Gastrocnemius medialis (tissue), 4 donors: ENCODE measurements at regions of chr3 and their contacts with region 1.

Region 1: DNA sequence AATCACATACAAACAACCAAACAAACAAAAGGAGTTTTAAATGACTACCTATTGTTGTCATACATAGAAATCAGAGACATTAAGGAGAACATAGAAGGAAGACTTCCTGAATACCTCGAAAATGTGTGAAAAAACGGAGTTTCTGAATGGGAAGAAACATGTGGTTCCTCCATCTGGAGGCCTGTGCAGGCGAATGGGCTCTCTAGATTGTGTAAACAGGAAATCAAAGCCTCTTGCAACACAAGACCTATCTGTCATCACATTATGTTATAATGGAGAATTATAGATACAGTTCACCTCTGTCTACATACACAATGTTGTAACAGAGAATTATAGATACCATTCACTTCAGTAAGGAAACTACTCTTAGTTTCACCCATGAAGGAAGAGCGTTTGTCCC is 44.1 kb downstream of the RUBCN start:
- DNase-seq: no peak
- ATAC-seq: no peak
- H3K4me3 ChIP-seq: no peak overlapping the region
- H3K27ac ChIP-seq: no peak overlapping the region
- H3K4me1 ChIP-seq: no peaks in the 10 kb centered on the region
- H3K27me3 ChIP-seq: no peaks in the 10 kb centered on the region
- CTCF ChIP-seq: no peak
- POLR2A ChIP-seq: no peak

Region 2: DNA sequence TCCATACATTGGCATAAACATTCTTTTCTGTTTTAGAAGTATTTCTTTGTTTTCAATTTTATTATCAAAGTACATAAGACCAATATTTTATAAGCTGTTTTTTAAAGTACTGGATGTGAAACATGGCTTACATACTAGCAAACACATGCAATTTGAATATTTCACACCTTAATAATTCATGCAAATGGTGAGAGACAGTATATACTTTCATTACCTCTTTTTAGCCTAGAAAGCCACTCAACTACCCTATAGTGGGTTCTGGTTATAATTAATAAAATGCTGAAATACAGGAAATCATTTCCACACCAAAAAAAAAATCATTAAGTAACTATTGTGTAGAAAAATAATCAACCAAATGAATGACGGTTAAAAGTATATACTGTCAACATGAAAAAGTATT is 624.6 kb before region 1 on chr3:
- in situ Hi-C with region 1: no loop called
- intact Hi-C with region 1: no loop called
- DNase-seq: no peak
- ATAC-seq: no peak
- H3K4me3 ChIP-seq: no peak overlapping the region
- H3K27ac ChIP-seq: no peak overlapping the region
- H3K4me1 ChIP-seq: no peaks in the 10 kb centered on the region
- H3K27me3 ChIP-seq: no peaks in the 10 kb centered on the region
- CTCF ChIP-seq: no peak
- POLR2A ChIP-seq: no peak

Region 3: DNA sequence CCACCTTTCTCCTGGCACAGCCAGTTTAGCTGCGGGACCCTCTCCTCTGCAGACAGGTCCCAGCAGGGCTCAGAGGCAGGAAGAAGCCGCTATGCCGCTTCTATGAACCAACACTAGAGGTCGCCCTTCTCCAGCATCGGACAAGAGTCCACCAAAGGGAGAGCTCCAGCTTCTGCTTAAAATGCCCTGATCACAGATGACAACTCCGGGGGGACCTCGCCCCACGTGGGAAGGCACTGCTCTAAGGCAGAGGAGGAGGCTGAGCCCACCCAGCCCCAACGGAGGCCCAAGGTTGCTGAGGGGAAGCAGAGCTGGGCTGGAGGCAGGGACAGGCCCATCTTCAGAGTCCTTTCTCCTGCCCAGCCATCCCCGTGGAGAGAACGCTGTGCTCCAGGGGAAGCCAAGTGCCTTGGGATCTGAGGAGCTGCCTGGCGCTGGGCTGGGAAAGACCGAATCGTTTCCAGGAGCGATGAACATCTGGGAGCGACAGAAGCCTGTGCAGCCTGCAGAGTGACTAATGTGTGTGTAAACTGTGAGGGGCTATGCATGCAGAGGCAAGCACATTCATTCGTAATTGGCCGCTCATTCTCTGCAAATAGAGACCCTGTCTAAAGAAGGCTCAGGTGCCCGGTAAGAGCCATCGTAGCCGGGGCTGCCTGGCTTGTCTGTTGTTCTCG is 93.4 kb before region 1 on chr3:
- in situ Hi-C with region 1: loop called in 2 of 4 experiments (anchors 25 kb)
- intact Hi-C with region 1: no loop called
- DNase-seq: peak; percentile 27 to 54
- ATAC-seq: peak; percentile 86
- H3K4me3 ChIP-seq: no peak overlapping the region
- H3K27ac ChIP-seq: no peak overlapping the region
- H3K4me1 ChIP-seq: no peaks in the 10 kb centered on the region
- H3K27me3 ChIP-seq: no peaks in the 10 kb centered on the region
- CTCF ChIP-seq: peak; percentile 62 to 91 (median 80)
- POLR2A ChIP-seq: no peak